Right lobe of liver (tissue), 6 donors: ENCODE measurements at regions of chr12 and their contacts with region 1.

Region 1: GRCh38 chr12:95351748-95352147 is 122.2 kb upstream of the METAP2 start:
- DNase-seq: peak in 2 of 3 donors; percentile 38 to 53
- ATAC-seq: peak; percentile 77 to 89 (median 84)
- H3K4me3 ChIP-seq: no peak overlapping the region
- H3K27ac ChIP-seq: no peak overlapping the region
- H3K4me1 ChIP-seq: no peaks in the 10 kb centered on the region
- H3K27me3 ChIP-seq: no peaks in the 10 kb centered on the region
- CTCF ChIP-seq: peak in 3 of 4 donors; percentile 16 to 34 (median 20)
- POLR2A ChIP-seq: no peak

Region 2: GRCh38 chr12:95428472-95428871 is 76.7 kb after region 1 on chr12:
- intact Hi-C with region 1: no loop called
- DNase-seq: no peak
- ATAC-seq: peak; percentile 76 to 94 (median 89)
- H3K4me3 ChIP-seq: no peak overlapping the region
- H3K27ac ChIP-seq: no peak overlapping the region
- H3K4me1 ChIP-seq: peaks cover 0 to 13% (median 0%) of the 10 kb centered on the region in 4 donors
- H3K27me3 ChIP-seq: no peaks in the 10 kb centered on the region
- CTCF ChIP-seq: no peak
- POLR2A ChIP-seq: no peak

Region 3: GRCh38 chr12:95532851-95533250 is 181.1 kb after region 1 on chr12:
- intact Hi-C with region 1: loop called in 1 of 2 experiments (anchors 10 kb)
- DNase-seq: no peak
- ATAC-seq: no peak
- H3K4me3 ChIP-seq: no peak overlapping the region
- H3K27ac ChIP-seq: no peak overlapping the region
- H3K4me1 ChIP-seq: no peaks in the 10 kb centered on the region
- H3K27me3 ChIP-seq: no peaks in the 10 kb centered on the region
- CTCF ChIP-seq: no peak
- POLR2A ChIP-seq: no peak